Heart left ventricle (tissue), 16 donors: ENCODE measurements at regions of chr1 and their contacts with region 1.

Region 1: DNA sequence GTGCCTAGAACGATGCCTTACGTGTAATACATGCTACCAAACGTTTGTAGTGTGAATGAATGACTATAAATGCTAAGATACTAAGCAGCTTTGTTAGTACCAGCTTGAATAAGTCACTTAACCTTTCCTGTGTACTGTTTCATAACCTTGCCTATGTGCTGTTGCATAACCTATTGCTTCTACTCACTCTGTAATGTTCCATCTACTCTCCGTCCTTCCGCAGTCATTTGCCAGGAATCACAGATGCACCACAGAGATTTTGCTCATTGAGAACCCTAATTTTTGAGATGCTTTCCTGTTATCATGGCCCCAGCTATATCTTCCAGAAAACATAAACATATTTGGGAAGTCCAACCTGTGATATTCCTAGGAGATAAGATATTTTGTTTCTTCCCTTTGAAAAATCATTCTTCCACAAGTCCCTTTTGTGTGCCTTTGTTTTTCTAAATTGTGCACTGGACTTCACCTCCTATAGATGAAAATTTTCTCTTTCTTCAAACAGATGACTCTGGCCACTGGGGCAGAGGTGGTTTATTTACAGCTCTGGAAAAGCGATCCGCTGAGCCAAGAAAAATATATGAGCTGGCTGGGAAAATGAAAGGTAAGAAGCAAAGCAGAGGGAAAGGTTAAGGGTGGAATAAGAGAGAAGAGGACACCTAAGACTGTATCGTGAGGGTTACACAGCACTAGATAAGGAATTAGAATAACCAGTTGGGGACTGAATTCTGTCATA is 44.8 kb downstream of the CHD1L start:
- DNase-seq: no peak
- ATAC-seq: no peak
- H3K4me3 ChIP-seq: no peak overlapping the region
- H3K27ac ChIP-seq: no peak overlapping the region
- H3K4me1 ChIP-seq: no peaks in the 10 kb centered on the region
- H3K27me3 ChIP-seq: no peaks in the 10 kb centered on the region
- CTCF ChIP-seq: no peak
- POLR2A ChIP-seq: no peak

Region 2: GRCh38 chr1:147635342-147635741 is 348.0 kb after region 1 on chr1:
- intact Hi-C with region 1: loop called in 1 of 10 experiments (anchors 5 kb)
- DNase-seq: no peak
- ATAC-seq: peak; percentile 32 to 63 (median 45)
- H3K4me3 ChIP-seq: peak overlapping the region in 1 of 12 donors; percentile 12
- H3K27ac ChIP-seq: peak overlapping the region in 1 of 12 donors; percentile 73
- H3K4me1 ChIP-seq: peaks cover 0 to 11% (median 0%) of the 10 kb centered on the region in 12 donors
- H3K27me3 ChIP-seq: no peaks in the 10 kb centered on the region
- CTCF ChIP-seq: no peak
- POLR2A ChIP-seq: no peak